K562 (cell line): ENCODE measurements at regions of chr16 and their contacts with region 1.

Region 1: GRCh38 chr16:28879841-28880588 is 1.7 kb downstream of the ATP2A1 start:
- DNase-seq: peak; percentile 95 to 99 (median 99)
- ATAC-seq: peak; percentile 97
- H3K4me3 ChIP-seq: peak overlapping the region; percentile 82
- H3K27ac ChIP-seq: peak overlapping the region; percentile 61
- H3K4me1 ChIP-seq: peaks cover 11 to 67% of the 10 kb centered on the region in 2 experiments; a peak in 4 of 5 replicates
- H3K27me3 ChIP-seq: no peaks in the 10 kb centered on the region
- CTCF ChIP-seq: no peak
- EP300 ChIP-seq: no peak
- POLR2A ChIP-seq: peak; percentile 57; the same call in 1 of the 2 replicates
- RAD21 ChIP-seq: no peak

Region 2: GRCh38 chr16:28623172-28623711 is 256.8 kb before region 1 on chr16:
- CTCF ChIA-PET with region 1: no interaction called
- POLR2A ChIA-PET with region 1: no interaction called
- in situ Hi-C with region 1: no loop called
- intact Hi-C with region 1: no loop called
- DNase-seq: peak in 1 of 4 experiments; percentile 1
- ATAC-seq: no peak
- H3K4me3 ChIP-seq: no peak overlapping the region
- H3K27ac ChIP-seq: no peak overlapping the region
- H3K4me1 ChIP-seq: no peaks in the 10 kb centered on the region
- H3K27me3 ChIP-seq: no peaks in the 10 kb centered on the region; a peak in 2 of 5 replicates
- CTCF ChIP-seq: no peak
- EP300 ChIP-seq: no peak
- POLR2A ChIP-seq: no peak
- RAD21 ChIP-seq: no peak

Region 3: GRCh38 chr16:28863929-28864793 is 15.9 kb before region 1 on chr16:
- CTCF ChIA-PET with region 1: no interaction called
- POLR2A ChIA-PET with region 1: interaction called, 58 read pairs
- in situ Hi-C with region 1: no loop called
- intact Hi-C with region 1: no loop called
- DNase-seq: peak in 3 of 4 experiments; percentile 24 to 84 (median 41)
- ATAC-seq: peak; percentile 18
- H3K4me3 ChIP-seq: peak overlapping the region; percentile 88
- H3K27ac ChIP-seq: peak overlapping the region; percentile 99
- H3K4me1 ChIP-seq: peaks cover 14 to 28% of the 10 kb centered on the region in 2 experiments
- H3K27me3 ChIP-seq: no peaks in the 10 kb centered on the region
- CTCF ChIP-seq: no peak
- EP300 ChIP-seq: no peak
- POLR2A ChIP-seq: no peak
- RAD21 ChIP-seq: no peak

Region 4: DNA sequence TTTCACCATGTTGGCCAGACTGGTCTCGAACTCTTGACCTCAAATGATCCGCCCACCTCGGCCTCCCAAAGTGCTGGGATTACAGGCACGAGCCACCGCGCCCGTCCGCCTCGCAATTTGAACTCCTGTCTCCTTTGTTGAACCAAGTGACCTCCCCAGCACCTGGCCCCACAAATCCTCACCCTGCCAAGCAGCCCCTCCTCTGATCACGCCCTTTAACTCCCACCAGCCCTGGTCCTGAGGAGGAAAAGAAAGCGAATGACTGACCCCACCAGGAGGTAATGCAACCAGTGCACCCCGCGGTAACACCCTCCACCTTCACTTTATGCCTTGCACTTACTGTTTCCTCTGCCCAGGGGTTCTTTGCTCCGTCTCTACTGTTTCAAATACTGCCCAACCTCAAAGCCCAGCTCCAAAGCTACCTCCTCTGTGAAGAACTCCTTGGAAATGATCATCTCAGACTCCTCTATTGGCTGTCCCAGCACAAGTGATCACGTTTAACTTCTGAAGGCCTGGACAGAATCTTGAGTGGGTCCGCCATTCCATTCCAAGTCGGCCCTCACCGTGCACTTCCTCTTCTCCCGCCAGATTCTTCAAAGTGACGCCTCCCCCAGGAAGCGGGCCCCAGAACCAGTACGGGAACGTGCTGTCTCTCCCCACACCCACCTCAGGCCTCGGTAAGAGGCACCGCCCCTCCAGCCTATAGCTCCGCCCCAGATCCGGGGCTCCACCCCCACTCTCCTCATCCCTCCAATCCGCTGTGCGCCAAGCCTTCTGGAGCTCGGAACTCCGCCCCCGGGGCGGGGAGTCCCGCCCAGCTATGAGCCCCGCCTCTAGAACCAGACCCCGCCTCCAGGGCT is 56.1 kb after region 1 on chr16:
- CTCF ChIA-PET with region 1: no interaction called
- POLR2A ChIA-PET with region 1: interaction called, 3 read pairs
- in situ Hi-C with region 1: no loop called
- intact Hi-C with region 1: loop called (anchors 5 kb)
- DNase-seq: peak; percentile 96 to 99 (median 98)
- ATAC-seq: peak; percentile 99
- H3K4me3 ChIP-seq: peak overlapping the region; percentile 48
- H3K27ac ChIP-seq: peak overlapping the region; percentile 73
- H3K4me1 ChIP-seq: peaks cover 8 to 48% of the 10 kb centered on the region in 2 experiments; a peak in 4 of 5 replicates
- H3K27me3 ChIP-seq: no peaks in the 10 kb centered on the region
- CTCF ChIP-seq: peak in 1 of 3 experiments; percentile 5; a peak in 1 of 6 replicates
- EP300 ChIP-seq: no peak
- POLR2A ChIP-seq: peak; percentile 73
- RAD21 ChIP-seq: peak in 1 of 2 experiments; percentile 28; a peak in 2 of 4 replicates